ENCODE measurements at regions of chr12 and their contacts with region 1.

Region 1: GRCh38 chr12:21683115-21683514 is 25.5 kb upstream of the LDHB start:
- DNase-seq: no peak
- ATAC-seq: no peak
- H3K4me3 ChIP-seq: no peak overlapping the region
- H3K27ac ChIP-seq: no peak overlapping the region
- H3K4me1 ChIP-seq: peaks cover 0 to 3% of the 10 kb centered on the region in 2 experiments; a peak in 3 of 5 replicates
- H3K27me3 ChIP-seq: no peaks in the 10 kb centered on the region
- CTCF ChIP-seq: no peak
- EP300 ChIP-seq: no peak
- POLR2A ChIP-seq: no peak
- RAD21 ChIP-seq: no peak

Region 2: DNA sequence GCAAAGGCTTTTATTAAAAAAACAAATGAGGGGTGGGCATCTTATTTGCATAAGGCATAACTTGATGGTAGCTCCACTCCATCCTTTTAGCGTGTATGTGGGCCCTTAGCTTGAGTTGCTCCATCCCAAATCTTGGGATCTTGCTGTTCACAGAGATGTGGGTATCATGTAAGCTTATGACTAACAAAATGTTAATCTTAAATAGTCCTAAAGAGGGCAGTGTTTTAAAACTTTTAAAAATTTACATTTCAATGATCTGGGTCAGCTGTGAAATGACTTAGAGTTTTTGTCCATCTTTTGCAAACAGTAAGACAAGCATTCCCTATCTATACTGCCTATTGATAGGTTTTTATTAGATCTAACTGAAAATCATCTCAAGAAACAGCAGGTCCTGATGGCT is 434.4 kb before region 1 on chr12:
- CTCF ChIA-PET with region 1: no interaction called
- POLR2A ChIA-PET with region 1: no interaction called
- in situ Hi-C with region 1: no loop called
- intact Hi-C with region 1: loop called (anchors 5 kb)
- DNase-seq: no peak
- ATAC-seq: peak; percentile 54; the same call in 1 of the 3 replicates
- H3K4me3 ChIP-seq: no peak overlapping the region
- H3K27ac ChIP-seq: no peak overlapping the region
- H3K4me1 ChIP-seq: no peaks in the 10 kb centered on the region
- H3K27me3 ChIP-seq: no peaks in the 10 kb centered on the region
- CTCF ChIP-seq: 0 out of 6 replicates have a peak, but pooled peaks of 1 of the 3 experiments have one; percentile 12
- EP300 ChIP-seq: no peak
- POLR2A ChIP-seq: no peak
- RAD21 ChIP-seq: peak; percentile 16 to 23; a peak in 1 of 4 replicates

Region 3: GRCh38 chr12:21324551-21324950 is 358.6 kb before region 1 on chr12:
- CTCF ChIA-PET with region 1: no interaction called
- POLR2A ChIA-PET with region 1: no interaction called
- in situ Hi-C with region 1: loop called (anchors 10 kb)
- intact Hi-C with region 1: no loop called
- DNase-seq: no peak
- ATAC-seq: no peak
- H3K4me3 ChIP-seq: no peak overlapping the region
- H3K27ac ChIP-seq: no peak overlapping the region
- H3K4me1 ChIP-seq: no peaks in the 10 kb centered on the region
- H3K27me3 ChIP-seq: no peaks in the 10 kb centered on the region
- CTCF ChIP-seq: no peak
- EP300 ChIP-seq: no peak
- POLR2A ChIP-seq: no peak
- RAD21 ChIP-seq: no peak

Region 4: DNA sequence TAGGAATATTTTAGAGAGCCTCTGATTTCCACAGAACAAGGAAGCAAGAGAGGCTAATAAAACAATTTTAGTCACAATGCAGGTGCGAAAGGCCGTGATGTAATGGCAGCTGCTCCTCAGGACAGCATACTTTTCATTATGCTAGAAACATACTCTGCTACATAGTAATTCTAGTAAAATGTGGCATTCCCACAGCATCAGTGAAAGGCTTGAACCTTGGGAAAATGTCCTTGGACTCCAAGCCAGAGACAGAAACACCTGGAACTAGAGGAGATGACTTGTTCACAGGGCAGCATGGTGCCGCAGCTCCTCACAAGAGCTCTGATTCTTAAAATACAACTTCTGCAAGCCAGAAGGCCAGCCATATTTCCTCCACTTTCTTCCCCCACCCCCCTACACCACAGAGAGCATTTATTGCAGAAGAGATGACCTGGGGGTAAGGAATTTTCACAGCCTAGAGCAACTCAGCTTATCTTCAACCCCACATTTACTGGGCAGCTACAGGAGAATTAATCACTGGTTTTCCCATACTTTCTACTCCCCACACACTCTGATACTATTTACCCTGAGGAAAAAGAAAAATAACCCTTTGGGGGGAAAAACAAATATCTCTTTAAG is 242.3 kb after region 1 on chr12:
- CTCF ChIA-PET with region 1: no interaction called
- POLR2A ChIA-PET with region 1: no interaction called
- in situ Hi-C with region 1: no loop called
- intact Hi-C with region 1: no loop called
- DNase-seq: peak in 2 of 4 experiments; percentile 12 to 37
- ATAC-seq: peak; percentile 61
- H3K4me3 ChIP-seq: no peak overlapping the region
- H3K27ac ChIP-seq: no peak overlapping the region
- H3K4me1 ChIP-seq: no peaks in the 10 kb centered on the region
- H3K27me3 ChIP-seq: no peaks in the 10 kb centered on the region; a peak in 1 of 5 replicates
- CTCF ChIP-seq: no peak
- EP300 ChIP-seq: no peak
- POLR2A ChIP-seq: no peak
- RAD21 ChIP-seq: no peak